A549 (cell line): ENCODE measurements at regions of chr6 and their contacts with region 1.

Region 1: GRCh38 chr6:142485256-142485655 is 183.4 kb downstream of the ADGRG6 start:
- DNase-seq: no peak
- ATAC-seq: no peak
- H3K4me3 ChIP-seq: no peak overlapping the region
- H3K27ac ChIP-seq: no peak overlapping the region
- H3K4me1 ChIP-seq: no peaks in the 10 kb centered on the region
- CTCF ChIP-seq: no peak
- EP300 ChIP-seq: no peak
- POLR2A ChIP-seq: no peak
- RAD21 ChIP-seq: no peak

Region 2: GRCh38 chr6:142474531-142475289 is 10.5 kb before region 1 on chr6:
- CTCF ChIA-PET with region 1: interaction called, 20 read pairs
- POLR2A ChIA-PET with region 1: no interaction called
- DNase-seq: peak; percentile 28 to 65
- ATAC-seq: peak; percentile 96 to 99
- H3K4me3 ChIP-seq: no peak overlapping the region
- H3K27ac ChIP-seq: peak overlapping the region in 1 of 2 experiments; percentile 63; a peak in 3 of 6 replicates
- H3K4me1 ChIP-seq: no peaks in the 10 kb centered on the region
- CTCF ChIP-seq: peak; percentile 82
- EP300 ChIP-seq: no peak
- POLR2A ChIP-seq: no peak
- RAD21 ChIP-seq: peak; percentile 82 to 83

Region 3: DNA sequence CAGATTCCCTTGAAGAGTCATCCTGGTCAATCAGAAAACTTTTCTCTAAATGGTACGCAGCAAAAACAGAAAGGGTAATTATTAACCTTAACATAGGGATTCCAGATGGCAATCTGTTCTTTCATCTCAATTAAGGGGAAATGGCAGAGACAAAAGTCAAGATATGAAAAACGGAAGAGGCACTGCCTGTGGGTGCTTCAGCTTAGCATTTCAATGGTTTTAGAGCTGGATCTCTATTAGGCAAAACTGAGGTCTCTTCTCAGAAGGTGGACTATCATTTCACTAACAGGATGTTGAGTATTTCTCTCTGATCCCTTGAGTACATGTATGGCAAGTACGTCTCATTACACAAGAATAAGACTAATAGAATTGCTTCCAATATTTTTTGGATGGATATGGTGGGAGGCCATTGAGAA is 162.8 kb after region 1 on chr6:
- CTCF ChIA-PET with region 1: no interaction called
- POLR2A ChIA-PET with region 1: no interaction called
- DNase-seq: no peak
- ATAC-seq: no peak
- H3K4me3 ChIP-seq: no peak overlapping the region
- H3K27ac ChIP-seq: no peak overlapping the region
- H3K4me1 ChIP-seq: 0 out of 3 replicates have a peak, but pooled peaks cover 3% of the 10 kb centered on the region
- CTCF ChIP-seq: no peak
- EP300 ChIP-seq: no peak
- POLR2A ChIP-seq: no peak
- RAD21 ChIP-seq: no peak

Region 4: DNA sequence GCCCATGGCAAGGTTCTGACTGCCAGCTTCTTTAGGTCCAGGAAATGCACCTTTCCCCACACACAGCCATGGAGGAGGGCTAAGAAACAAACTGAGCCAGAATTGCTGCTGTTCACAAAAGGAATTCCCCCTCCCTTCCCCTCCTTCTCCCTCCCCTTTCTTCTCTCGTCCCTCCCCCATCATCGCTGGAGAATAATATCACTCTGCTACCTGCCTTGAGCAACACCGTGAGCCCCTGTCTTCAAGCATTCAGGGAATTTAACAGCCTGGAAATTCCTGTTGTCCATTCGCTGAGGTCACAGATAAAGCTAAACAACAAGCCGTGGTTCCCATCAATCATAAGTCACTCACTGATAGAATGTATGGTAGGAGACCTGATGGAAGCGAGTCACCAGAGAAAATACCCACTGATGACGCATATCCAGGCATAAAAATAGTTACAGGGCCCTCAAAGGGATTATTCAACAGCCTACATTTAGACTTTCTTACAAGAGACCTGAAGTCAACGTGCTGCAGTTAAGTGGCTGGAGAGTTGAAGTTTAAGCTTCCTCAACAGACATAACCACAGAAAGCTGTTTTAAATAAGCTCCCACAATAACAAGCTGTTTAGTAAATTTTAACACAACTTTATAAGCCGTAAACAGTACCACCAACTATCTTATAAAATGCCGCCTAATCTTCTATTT is 400.1 kb after region 1 on chr6:
- CTCF ChIA-PET with region 1: no interaction called
- POLR2A ChIA-PET with region 1: no interaction called
- DNase-seq: peak; percentile 41 to 95
- ATAC-seq: peak; percentile 97 to 98
- H3K4me3 ChIP-seq: peak overlapping the region; percentile 38
- H3K27ac ChIP-seq: peak overlapping the region; percentile 66 to 73; a peak in 5 of 6 replicates
- H3K4me1 ChIP-seq: peaks cover 37% of the 10 kb centered on the region
- CTCF ChIP-seq: no peak
- EP300 ChIP-seq: peak; percentile 66 to 80; a peak in 3 of 5 replicates
- POLR2A ChIP-seq: no peak
- RAD21 ChIP-seq: peak; percentile 3 to 51; a peak in 2 of 5 replicates